Common myeloid progenitor, CD34-positive (primary cell): ENCODE measurements at regions of chr1 and their contacts with region 1.

Region 1: GRCh38 chr1:160342953-160343869 is at the starts of genes COPA and NCSTN:
- DNase-seq: peak; percentile 94 to 97 (median 95)
- H3K4me3 ChIP-seq: peak within 1 kb of the TSS; percentile 91 to 100 (median 98)
- H3K27ac ChIP-seq: peak within 1 kb of the TSS; percentile 98 to 99
- H3K4me1 ChIP-seq: peaks cover 23 to 41% (median 32%) of the 10 kb centered on the region in 4 experiments
- H3K27me3 ChIP-seq: no peaks in the 10 kb centered on the region

Region 2: DNA sequence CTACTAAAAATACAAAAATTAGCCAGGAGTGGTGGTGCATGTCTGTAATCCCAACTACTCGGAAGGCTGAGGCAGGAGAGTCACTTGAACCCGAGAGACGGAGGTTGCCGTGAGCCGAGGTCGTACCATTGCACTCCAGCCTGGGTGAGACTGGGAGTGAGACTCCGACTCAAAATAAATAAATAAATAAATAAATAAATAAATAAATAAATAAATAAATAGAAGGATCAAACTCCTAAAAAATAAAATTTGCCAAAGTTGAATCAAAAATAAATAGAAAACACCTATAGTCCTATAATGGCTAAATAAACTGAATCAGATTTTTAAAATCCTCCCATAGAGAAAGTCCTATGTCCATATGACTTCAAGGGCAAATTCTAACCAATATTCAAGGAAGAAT is 43.0 kb before region 1 on chr1:
- CTCF ChIA-PET with region 1: no interaction called
- POLR2A ChIA-PET with region 1: no interaction called
- DNase-seq: no peak
- H3K4me3 ChIP-seq: no peak overlapping the region
- H3K27ac ChIP-seq: no peak overlapping the region
- H3K4me1 ChIP-seq: no peaks in the 10 kb centered on the region
- H3K27me3 ChIP-seq: no peaks in the 10 kb centered on the region

Region 3: DNA sequence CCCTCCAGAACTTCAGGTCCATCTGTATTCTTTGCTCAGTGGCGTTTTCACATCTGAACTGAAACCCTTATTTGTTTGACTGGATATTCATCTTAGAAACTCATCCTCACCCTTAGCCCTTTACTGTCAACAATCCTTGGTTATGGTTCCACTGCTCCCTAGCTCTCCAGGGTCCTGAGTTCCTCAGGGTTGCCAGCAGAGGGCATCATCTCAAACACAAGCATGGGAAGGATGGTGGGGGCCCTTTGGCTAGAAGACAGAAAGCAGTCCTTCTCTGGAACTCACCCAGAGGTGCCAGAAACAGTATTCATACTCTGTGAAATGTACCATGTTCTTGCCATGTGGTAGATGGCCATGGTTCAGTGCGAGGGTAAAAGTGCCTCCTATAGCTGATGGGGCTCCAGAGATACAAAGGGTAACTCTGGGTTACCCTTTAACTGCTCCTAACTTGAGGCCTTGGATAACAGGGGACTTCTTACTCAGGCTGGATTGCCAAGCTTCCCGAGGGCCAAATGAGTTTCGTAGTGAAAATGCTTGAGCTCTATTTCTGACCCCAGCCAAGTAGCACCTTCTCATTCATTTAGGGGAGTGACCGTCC is 11.3 kb after region 1 on chr1:
- CTCF ChIA-PET with region 1: interaction called, 33 read pairs
- POLR2A ChIA-PET with region 1: no interaction called
- DNase-seq: peak; percentile 40 to 70 (median 67)
- H3K4me3 ChIP-seq: no peak overlapping the region
- H3K27ac ChIP-seq: no peak overlapping the region
- H3K4me1 ChIP-seq: no peaks in the 10 kb centered on the region
- H3K27me3 ChIP-seq: no peaks in the 10 kb centered on the region

Region 4: GRCh38 chr1:160376525-160377131 is 33.4 kb after region 1 on chr1:
- CTCF ChIA-PET with region 1: interaction called, 437 read pairs
- POLR2A ChIA-PET with region 1: no interaction called
- DNase-seq: peak; percentile 76 to 87 (median 85)
- H3K4me3 ChIP-seq: peak overlapping the region in 3 of 7 experiments; percentile 4 to 49 (median 43)
- H3K27ac ChIP-seq: no peak overlapping the region
- H3K4me1 ChIP-seq: peaks cover 5 to 24% (median 20%) of the 10 kb centered on the region in 4 experiments
- H3K27me3 ChIP-seq: no peaks in the 10 kb centered on the region